Activated naive CD8-positive, alpha-beta T cell treated with anti-CD3 and anti-CD28 coated beads, Interleukin-2, amount 10 ng/mL, durations not matched to agents 7 days and 5 days (primary cell): ENCODE measurements at regions of chr9 and their contacts with region 1.

Region 1: DNA sequence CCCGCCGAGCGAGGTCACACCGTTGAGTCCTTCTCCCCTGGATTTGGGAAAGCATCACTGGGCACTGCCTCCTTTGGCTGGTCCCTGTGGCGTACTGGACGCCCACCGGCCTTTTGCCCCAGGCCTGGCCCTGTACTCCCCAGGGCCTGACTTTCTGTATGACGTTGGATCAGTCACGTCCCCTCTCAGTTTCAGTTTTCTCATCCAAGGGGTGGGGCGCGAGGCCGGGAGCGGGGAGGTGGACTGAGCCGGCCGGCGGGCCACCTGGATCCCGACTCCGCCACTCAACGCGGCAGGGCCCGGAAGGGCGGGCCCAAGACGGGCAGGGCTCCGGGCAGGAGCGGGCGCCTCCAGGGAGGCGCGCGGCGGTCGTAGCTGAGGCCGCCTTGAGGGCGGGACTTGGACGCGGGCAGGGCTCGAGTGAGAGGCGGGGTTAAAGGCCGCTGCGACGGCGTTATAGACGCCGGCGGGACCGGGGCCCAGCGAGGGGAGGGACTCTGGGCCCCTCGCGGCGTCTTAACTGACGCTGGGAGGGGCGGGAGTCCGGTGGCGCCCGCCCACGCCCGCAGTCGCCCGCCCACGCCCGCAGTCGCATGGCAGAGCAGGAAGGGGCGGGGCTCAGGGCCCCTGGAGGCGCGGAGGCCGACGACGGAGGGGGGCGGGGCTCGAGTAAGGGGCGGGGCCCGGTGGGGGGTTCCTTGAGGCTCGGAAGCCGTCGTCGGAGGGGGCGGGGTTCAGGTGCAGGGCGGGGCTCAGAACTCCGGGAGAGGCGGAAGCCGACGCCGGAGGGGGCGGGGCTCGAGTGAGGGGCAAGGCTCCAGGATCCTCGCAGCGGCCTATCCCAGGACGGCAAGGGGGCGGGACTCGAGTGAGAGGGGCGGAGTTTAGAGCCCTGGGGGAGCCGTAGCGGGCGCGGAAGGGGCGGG is 549 bp upstream of the CARD19 start:
- DNase-seq: peak; percentile 100
- ATAC-seq: peak; percentile 79
- H3K4me3 Mint-ChIP-seq: peak overlapping the region; percentile 86
- H3K27ac Mint-ChIP-seq: peak overlapping the region; percentile 99
- H3K4me1 Mint-ChIP-seq: peaks cover 63% of the 10 kb centered on the region
- H3K27me3 Mint-ChIP-seq: no peaks in the 10 kb centered on the region

Region 2: GRCh38 chr9:93058355-93059096 is 36.9 kb before region 1 on chr9 and contains the start of gene SUSD3:
- POLR2A ChIA-PET with region 1: interaction called, 39 read pairs
- DNase-seq: peak; percentile 79
- ATAC-seq: peak; percentile 56
- H3K4me3 Mint-ChIP-seq: peak within 1 kb of the TSS; percentile 95
- H3K27ac Mint-ChIP-seq: peak within 1 kb of the TSS; percentile 93
- H3K4me1 Mint-ChIP-seq: peaks cover 42% of the 10 kb centered on the region
- H3K27me3 Mint-ChIP-seq: no peaks in the 10 kb centered on the region
- total RNA-seq, gene SUSD3: 68.0 to 70.4 TPM

Region 3: GRCh38 chr9:93082841-93083411 is 12.5 kb before region 1 on chr9:
- POLR2A ChIA-PET with region 1: interaction called, 18 read pairs
- DNase-seq: no peak
- ATAC-seq: peak; percentile 57
- H3K4me3 Mint-ChIP-seq: peak overlapping the region; percentile 35
- H3K27ac Mint-ChIP-seq: peak overlapping the region; percentile 97
- H3K4me1 Mint-ChIP-seq: peaks cover 24% of the 10 kb centered on the region
- H3K27me3 Mint-ChIP-seq: no peaks in the 10 kb centered on the region

Region 4: DNA sequence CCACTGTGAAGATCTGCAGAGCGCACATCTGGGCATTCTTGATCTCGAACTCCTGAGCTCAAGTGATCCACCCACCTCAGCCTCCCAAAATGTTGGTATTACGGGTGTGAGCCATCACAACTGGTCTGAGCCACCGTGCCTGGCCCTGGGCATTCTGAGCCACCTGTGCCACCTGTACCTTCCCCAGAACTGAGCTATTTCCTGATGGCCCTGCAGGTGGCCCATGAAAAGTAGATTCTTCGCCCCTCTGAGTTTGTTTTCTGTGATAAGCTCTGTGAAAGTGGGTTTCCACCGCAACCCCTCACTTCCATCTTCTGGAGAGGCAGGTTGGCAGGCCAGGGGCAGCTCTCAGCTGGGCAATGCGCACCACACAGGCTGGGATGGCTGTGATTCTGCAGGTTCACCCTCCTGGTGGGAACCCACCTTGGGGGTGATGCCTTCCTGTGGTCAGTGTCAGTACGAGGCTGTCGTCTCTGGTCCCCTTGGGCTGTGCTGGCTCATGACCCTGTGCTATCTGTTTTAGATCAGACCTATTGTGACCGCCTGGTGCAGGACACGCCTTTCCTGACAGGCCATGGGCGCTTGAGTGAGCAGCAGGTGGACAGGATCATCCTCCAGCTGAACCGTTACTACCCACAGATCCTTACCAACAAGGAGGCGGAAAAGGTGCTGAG is 11.8 kb after region 1 on chr9:
- POLR2A ChIA-PET with region 1: interaction called, 11 read pairs
- DNase-seq: peak; percentile 22
- ATAC-seq: no peak
- H3K4me3 Mint-ChIP-seq: no peak overlapping the region
- H3K27ac Mint-ChIP-seq: no peak overlapping the region
- H3K4me1 Mint-ChIP-seq: peaks cover 33% of the 10 kb centered on the region
- H3K27me3 Mint-ChIP-seq: no peaks in the 10 kb centered on the region